ENCODE measurements at regions of chr4 and their contacts with region 1.

Region 1: DNA sequence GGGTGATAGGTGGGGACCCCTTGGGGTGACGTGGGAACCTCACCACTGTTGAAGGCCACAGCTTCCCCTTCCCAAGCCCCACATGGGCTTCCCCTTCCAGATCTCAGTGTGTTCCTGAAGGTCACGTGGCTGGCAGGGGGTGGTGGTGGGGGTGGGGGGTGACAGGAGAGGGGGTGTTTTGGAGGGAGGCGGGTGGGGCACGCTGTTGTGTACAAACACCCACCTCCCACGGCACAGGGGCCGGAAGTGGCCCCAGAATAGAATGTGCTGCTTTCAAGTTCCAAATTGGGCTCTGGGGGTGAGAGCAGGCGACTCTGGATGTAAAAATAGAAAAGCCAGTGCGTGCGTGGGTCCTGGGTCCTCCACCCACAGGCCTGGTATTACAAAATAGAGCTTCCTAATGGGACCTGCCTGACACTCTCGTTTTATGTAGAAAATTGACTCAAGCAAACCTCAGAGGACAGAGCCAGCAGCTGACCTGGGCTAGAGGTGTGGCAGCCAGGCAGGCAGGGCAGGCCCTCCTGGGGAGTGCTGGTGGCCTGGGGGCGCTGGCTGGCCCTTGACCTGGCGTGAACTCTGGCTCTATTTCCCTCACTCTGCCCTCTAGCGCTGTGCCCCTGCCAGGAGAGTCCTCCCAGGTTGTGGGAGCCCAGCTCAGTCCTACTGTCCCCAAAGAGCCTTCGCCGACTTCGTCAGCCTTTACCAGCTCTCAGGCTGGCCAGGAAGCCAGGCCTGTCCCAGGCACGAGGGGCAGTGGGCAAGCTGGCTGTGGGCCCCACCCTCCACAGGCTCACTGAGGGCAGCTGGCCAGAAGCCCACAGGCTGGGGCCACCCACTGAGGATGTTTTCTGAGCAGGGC is 5.4 kb upstream of the SH3BP2 start:
- DNase-seq: peak; percentile 73
- H3K4me3 Mint-ChIP-seq: no peak overlapping the region
- H3K27ac Mint-ChIP-seq: peak overlapping the region; percentile 96
- H3K4me1 Mint-ChIP-seq: peaks cover 52% of the 10 kb centered on the region
- H3K27me3 Mint-ChIP-seq: no peaks in the 10 kb centered on the region

Region 2: DNA sequence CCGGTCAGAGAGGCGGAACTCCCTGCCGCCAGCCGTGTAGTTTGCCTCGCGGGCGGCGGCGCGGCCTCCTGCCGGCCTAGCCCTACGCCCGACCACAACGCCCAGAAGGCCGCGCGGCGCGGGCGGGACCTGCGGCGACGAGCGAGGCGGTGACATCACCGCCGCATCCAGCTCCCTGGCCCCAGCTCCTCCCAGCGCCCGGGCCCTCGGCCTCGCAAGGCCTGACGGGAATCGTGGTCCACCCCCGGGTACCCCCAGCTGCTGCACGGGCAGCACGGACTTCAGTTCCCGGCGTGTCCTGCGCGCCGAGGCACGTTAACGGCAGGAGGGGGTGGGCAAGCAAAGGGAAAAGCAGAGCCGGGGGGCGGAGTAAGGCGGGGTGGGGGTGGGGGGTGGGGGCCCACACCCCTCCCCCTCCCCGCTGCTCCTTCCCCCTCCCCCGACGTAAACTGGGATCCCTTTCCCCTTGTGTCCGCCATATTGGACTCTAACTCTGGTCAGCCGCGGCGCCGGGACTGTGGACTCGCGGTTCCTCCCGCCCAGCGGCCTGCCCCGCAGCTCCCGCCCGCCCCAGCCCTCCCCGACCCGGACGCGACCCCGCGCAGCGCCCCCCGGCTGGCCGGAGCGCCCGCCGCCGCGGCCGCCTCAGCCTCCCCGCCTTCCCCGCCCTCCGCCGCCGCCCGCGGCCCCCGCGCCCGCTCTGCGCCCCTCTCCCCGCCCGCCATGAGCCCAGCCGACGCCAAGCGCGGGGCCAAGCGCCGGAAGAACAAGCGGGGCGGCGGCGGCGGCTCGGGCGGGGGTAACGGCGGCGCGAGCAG is 251.1 kb before region 1 on chr4 and contains the start of gene FAM193A:
- CTCF ChIA-PET with region 1: no interaction called
- intact Hi-C with region 1: no loop called
- DNase-seq: peak; percentile 99
- H3K4me3 Mint-ChIP-seq: peak within 1 kb of the TSS; percentile 86
- H3K27ac Mint-ChIP-seq: peak within 1 kb of the TSS; percentile 83
- H3K4me1 Mint-ChIP-seq: peaks cover 18% of the 10 kb centered on the region
- H3K27me3 Mint-ChIP-seq: no peaks in the 10 kb centered on the region
- total RNA-seq, gene FAM193A: 20.1 to 20.4 TPM

Region 3: DNA sequence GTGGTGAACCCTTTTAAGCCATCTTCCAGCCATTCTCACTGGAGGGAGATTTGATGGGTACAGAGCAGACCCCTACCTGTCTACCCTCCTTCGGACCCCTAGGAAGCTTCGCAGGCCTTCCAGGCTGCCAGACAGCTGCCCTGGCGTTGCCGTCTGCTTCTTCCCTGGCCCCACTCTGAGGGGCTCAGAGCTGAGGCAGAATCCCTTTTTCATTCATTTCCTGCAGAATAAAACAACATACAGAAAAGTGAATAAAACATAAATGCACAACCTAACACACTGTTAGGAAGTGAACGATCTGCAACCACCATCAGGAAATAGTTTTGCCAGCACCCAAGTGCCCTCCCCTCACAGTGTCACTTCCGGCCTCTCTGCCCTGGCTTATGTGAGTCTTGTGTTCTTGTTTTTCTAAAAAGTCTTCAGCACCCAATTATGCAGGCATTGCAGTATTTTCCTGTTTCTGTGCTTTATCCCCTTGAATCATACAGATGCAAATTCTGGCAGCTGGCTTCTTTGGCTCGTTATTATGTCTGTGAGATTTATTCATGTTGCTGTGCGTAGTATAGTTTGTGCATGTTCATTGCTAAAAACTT is 50.5 kb after region 1 on chr4:
- CTCF ChIA-PET with region 1: no interaction called
- intact Hi-C with region 1: loop called (anchors 2 kb)
- DNase-seq: peak; percentile 88
- H3K4me3 Mint-ChIP-seq: peak overlapping the region; percentile 75
- H3K27ac Mint-ChIP-seq: peak overlapping the region; percentile 93
- H3K4me1 Mint-ChIP-seq: peaks cover 59% of the 10 kb centered on the region
- H3K27me3 Mint-ChIP-seq: no peaks in the 10 kb centered on the region

Measured in activated naive CD4-positive, alpha-beta T cell treated with anti-CD3 and anti-CD28 coated beads for 36 hours (primary cell).